Natural killer cell (primary cell): ENCODE measurements at regions of chr6 and their contacts with region 1.

Region 1: DNA sequence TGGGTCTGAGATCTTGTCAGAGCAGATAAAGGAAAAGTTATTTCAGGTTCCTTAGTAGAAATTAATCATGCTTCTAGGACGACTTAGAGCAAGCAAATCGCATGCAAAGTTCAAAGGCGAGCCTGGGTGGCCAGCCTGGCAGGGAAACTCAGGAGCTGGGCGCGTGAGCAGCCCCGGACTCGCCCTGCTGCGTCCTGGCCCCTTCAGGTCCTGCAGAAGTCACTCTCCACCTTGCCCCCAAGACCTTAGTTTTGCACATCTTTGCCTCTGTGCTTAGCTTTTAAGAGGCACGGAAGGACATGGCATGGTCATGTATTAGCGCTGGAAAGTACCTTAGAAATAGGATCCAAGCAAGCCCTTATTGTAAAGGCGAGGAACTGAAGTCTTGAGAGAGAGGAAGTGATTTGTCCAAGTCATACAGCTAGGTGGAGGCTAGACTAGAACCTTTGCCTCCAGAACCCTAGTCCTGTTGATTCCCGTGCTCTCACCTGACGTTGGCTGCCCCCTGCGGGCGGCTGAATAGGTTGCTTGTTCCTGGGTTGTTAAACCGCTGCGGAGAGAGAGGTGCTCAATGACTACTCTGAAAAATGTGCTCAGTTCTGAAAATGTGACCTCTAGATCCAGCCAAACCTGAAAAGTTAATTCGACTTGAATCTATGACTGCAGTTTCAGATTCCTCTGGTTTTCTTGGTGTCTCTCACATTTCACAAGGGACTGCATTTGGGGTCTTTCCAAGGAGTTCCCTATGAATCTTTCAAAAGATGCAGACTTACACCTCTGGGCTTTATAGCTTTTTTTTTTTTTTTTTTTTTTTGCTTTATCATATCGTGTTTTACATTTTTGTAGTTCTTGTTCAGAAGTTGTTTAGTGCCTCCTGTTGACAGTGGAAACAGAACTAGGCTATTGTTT is 2.7 kb downstream of the MYB start:
- DNase-seq: peak; percentile 39 to 87
- ATAC-seq: peak; percentile 39 to 56 (median 56)
- H3K4me3 ChIP-seq: peak overlapping the region; percentile 51
- H3K4me3 Mint-ChIP-seq: peak overlapping the region; percentile 88
- H3K27ac ChIP-seq: no peak overlapping the region
- H3K27ac Mint-ChIP-seq: no peak overlapping the region
- H3K4me1 ChIP-seq: peaks cover 24% of the 10 kb centered on the region
- H3K4me1 Mint-ChIP-seq: peaks cover 21 to 30% of the 10 kb centered on the region in 2 donors
- H3K27me3 ChIP-seq: peaks cover 3% of the 10 kb centered on the region
- H3K27me3 Mint-ChIP-seq: peaks cover 6 to 10% of the 10 kb centered on the region in 2 donors
- CTCF ChIP-seq: no peak

Region 2: GRCh38 chr6:135054569-135055498 is 129.0 kb before region 1 on chr6 and contains the start of gene HBS1L:
- intact Hi-C with region 1: loop called (anchors 10 kb)
- DNase-seq: peak; percentile 93 to 100
- ATAC-seq: peak; percentile 95 to 99 (median 97)
- H3K4me3 ChIP-seq: peak within 1 kb of the TSS; percentile 89
- H3K4me3 Mint-ChIP-seq: peak within 1 kb of the TSS; percentile 97
- H3K27ac ChIP-seq: peak within 1 kb of the TSS; percentile 93
- H3K27ac Mint-ChIP-seq: peak within 1 kb of the TSS; percentile 98 to 100
- H3K4me1 ChIP-seq: peaks cover 12% of the 10 kb centered on the region
- H3K4me1 Mint-ChIP-seq: peaks cover 34 to 35% of the 10 kb centered on the region in 2 donors
- H3K27me3 ChIP-seq: no peaks in the 10 kb centered on the region
- H3K27me3 Mint-ChIP-seq: peaks cover 0 to 21% of the 10 kb centered on the region in 2 donors
- CTCF ChIP-seq: no peak
- total RNA-seq, gene HBS1L: 75.3 to 82.2 (median 80.1) TPM

Region 3: GRCh38 chr6:135088818-135089809 is 94.7 kb before region 1 on chr6:
- intact Hi-C with region 1: loop called (anchors 2 kb)
- DNase-seq: peak in 1 of 2 donors; percentile 63
- ATAC-seq: peak; percentile 69 to 83 (median 83)
- H3K4me3 ChIP-seq: peak overlapping the region; percentile 13
- H3K4me3 Mint-ChIP-seq: peak overlapping the region; percentile 33
- H3K27ac ChIP-seq: no peak overlapping the region
- H3K27ac Mint-ChIP-seq: peak overlapping the region in 1 of 2 donors; percentile 70
- H3K4me1 ChIP-seq: peaks cover 13% of the 10 kb centered on the region
- H3K4me1 Mint-ChIP-seq: peaks cover 36 to 37% of the 10 kb centered on the region in 2 donors
- H3K27me3 ChIP-seq: no peaks in the 10 kb centered on the region
- H3K27me3 Mint-ChIP-seq: no peaks in the 10 kb centered on the region
- CTCF ChIP-seq: peak; percentile 55

Region 4: GRCh38 chr6:135145063-135145800 is 38.6 kb before region 1 on chr6:
- intact Hi-C with region 1: loop called (anchors 5 kb)
- DNase-seq: peak in 1 of 2 donors; percentile 68
- ATAC-seq: peak; percentile 57 to 73 (median 57)
- H3K4me3 ChIP-seq: peak overlapping the region; percentile 4
- H3K4me3 Mint-ChIP-seq: peak overlapping the region; percentile 77
- H3K27ac ChIP-seq: no peak overlapping the region
- H3K27ac Mint-ChIP-seq: peak overlapping the region; percentile 51 to 80
- H3K4me1 ChIP-seq: no peaks in the 10 kb centered on the region
- H3K4me1 Mint-ChIP-seq: peaks cover 6 to 18% of the 10 kb centered on the region in 2 donors
- H3K27me3 ChIP-seq: no peaks in the 10 kb centered on the region
- H3K27me3 Mint-ChIP-seq: no peaks in the 10 kb centered on the region
- CTCF ChIP-seq: peak; percentile 66

Region 5: GRCh38 chr6:135222623-135223022 is 38.8 kb after region 1 on chr6:
- intact Hi-C with region 1: no loop called
- DNase-seq: no peak
- ATAC-seq: no peak
- H3K4me3 ChIP-seq: no peak overlapping the region
- H3K4me3 Mint-ChIP-seq: no peak overlapping the region
- H3K27ac ChIP-seq: no peak overlapping the region
- H3K27ac Mint-ChIP-seq: no peak overlapping the region
- H3K4me1 ChIP-seq: no peaks in the 10 kb centered on the region
- H3K4me1 Mint-ChIP-seq: peaks cover 10 to 14% of the 10 kb centered on the region in 2 donors
- H3K27me3 ChIP-seq: no peaks in the 10 kb centered on the region
- H3K27me3 Mint-ChIP-seq: peaks cover 0 to 2% of the 10 kb centered on the region in 2 donors
- CTCF ChIP-seq: no peak

Region 6: GRCh38 chr6:135358251-135358821 is 174.6 kb after region 1 on chr6:
- intact Hi-C with region 1: no loop called
- DNase-seq: no peak
- ATAC-seq: no peak
- H3K4me3 ChIP-seq: no peak overlapping the region
- H3K4me3 Mint-ChIP-seq: no peak overlapping the region
- H3K27ac ChIP-seq: no peak overlapping the region
- H3K27ac Mint-ChIP-seq: no peak overlapping the region
- H3K4me1 ChIP-seq: no peaks in the 10 kb centered on the region
- H3K4me1 Mint-ChIP-seq: no peaks in the 10 kb centered on the region
- H3K27me3 ChIP-seq: no peaks in the 10 kb centered on the region
- H3K27me3 Mint-ChIP-seq: no peaks in the 10 kb centered on the region
- CTCF ChIP-seq: no peak